ENCODE measurements at regions of chr17 and their contacts with region 1.

Region 1: DNA sequence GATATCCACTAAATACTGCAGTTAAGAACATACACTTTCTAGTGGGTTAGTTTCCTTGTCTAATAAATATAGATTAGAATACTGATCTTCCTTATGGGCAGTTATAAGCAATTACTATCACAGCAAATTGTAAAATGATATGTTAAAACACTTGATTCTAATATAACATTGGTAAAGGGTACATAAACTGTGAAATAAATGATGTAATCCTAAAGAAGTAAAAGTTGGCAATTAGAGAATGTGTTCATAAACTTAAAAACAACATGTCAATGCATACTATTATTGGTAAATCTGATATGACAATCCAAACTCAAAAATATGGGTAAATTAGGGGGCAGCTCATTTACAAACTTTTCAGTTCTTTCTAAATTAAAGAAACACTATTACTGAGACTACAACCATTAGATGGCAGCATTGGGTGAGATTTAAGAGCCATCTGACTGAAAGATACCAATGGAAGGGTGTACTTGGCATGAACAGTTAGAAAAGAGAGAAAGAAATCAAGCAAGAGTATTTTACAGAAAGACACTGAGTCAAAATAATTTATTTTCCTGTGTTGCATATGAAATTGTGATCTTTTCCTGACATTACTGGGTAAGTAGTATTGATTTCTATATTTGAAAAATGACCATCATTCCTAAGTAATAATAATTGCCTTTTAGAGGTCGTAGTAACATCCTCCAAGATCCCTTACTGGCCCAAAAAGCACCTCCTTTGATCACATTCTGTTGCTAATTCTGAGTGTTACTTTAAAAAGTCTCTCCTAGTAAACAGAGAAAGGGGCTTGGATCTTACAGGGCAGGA is 119.6 kb downstream of the SPAG9 start:
- DNase-seq: peak; percentile 41
- H3K4me3 Mint-ChIP-seq: no peak overlapping the region
- H3K27ac Mint-ChIP-seq: no peak overlapping the region
- H3K4me1 Mint-ChIP-seq: no peaks in the 10 kb centered on the region
- H3K27me3 Mint-ChIP-seq: no peaks in the 10 kb centered on the region
- CTCF ChIP-seq: peak; percentile 48

Region 2: DNA sequence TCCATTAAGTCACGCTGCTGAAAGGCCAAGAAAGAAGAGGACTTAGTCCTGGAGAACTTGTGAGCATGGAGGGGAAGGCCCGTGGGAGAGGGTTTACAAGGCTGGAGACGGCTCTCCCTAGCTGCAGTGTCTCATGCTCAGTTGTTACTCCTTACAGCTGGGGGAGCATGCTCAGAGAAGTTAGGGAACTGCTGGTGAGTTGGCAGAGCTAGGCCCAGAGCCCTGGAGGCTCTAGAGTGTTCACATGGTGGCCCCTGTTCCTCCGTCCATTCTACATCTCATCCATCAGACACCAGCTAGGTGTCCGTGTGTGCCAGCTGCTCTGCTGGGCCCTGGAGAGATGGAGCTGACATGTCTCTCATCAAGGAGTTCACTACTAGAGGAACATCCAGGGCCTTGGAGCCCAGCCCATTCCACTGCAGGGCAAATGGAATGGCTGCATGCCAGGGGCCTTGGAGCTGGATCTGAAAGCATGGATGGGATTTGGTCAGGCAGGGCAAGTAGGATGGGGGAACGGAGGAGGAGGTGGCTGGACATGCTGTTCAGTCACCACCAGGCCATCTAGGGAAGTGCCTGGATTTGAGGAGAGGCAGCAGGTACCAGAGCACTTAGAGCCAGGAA is 648.9 kb before region 1 on chr17:
- CTCF ChIA-PET with region 1: no interaction called
- intact Hi-C with region 1: no loop called
- DNase-seq: no peak
- H3K4me3 Mint-ChIP-seq: no peak overlapping the region
- H3K27ac Mint-ChIP-seq: no peak overlapping the region
- H3K4me1 Mint-ChIP-seq: peaks cover 10% of the 10 kb centered on the region
- H3K27me3 Mint-ChIP-seq: no peaks in the 10 kb centered on the region
- CTCF ChIP-seq: no peak

Region 3: GRCh38 chr17:51153210-51154072 is 152.4 kb after region 1 on chr17 and contains the start of gene NME1:
- CTCF ChIA-PET with region 1: interaction called, 27 read pairs
- intact Hi-C with region 1: loop called (anchors 1 kb)
- DNase-seq: peak; percentile 99
- H3K4me3 Mint-ChIP-seq: no peak within 1 kb of the TSS
- H3K27ac Mint-ChIP-seq: no peak within 1 kb of the TSS
- H3K4me1 Mint-ChIP-seq: no peaks in the 10 kb centered on the region
- H3K27me3 Mint-ChIP-seq: no peaks in the 10 kb centered on the region
- CTCF ChIP-seq: peak; percentile 89
- total RNA-seq, gene NME1: 351 and 365 TPM in 2 replicates

Measured in Calu3 (cell line).